CD4-positive, alpha-beta memory T cell (primary cell): ENCODE measurements at regions of chr5 and their contacts with region 1.

Region 1: GRCh38 chr5:55021410-55021809 is 2.6 kb upstream of the GZMK start:
- DNase-seq: no peak
- H3K4me3 ChIP-seq: no peak overlapping the region
- H3K4me3 Mint-ChIP-seq: peak overlapping the region in 6 of 8 donors; percentile 3 to 71 (median 46)
- H3K27ac ChIP-seq: no peak overlapping the region
- H3K27ac Mint-ChIP-seq: peak overlapping the region in 6 of 7 donors; percentile 49 to 92 (median 77)
- H3K4me1 ChIP-seq: peaks cover 46% of the 10 kb centered on the region
- H3K4me1 Mint-ChIP-seq: peaks cover 31 to 65% (median 50%) of the 10 kb centered on the region in 4 donors
- H3K27me3 ChIP-seq: no peaks in the 10 kb centered on the region
- H3K27me3 Mint-ChIP-seq: no peaks in the 10 kb centered on the region

Region 2: GRCh38 chr5:54832858-54833257 is 188.6 kb before region 1 on chr5:
- CTCF ChIA-PET with region 1: no interaction called
- POLR2A ChIA-PET with region 1: no interaction called
- intact Hi-C with region 1: no loop called
- DNase-seq: no peak
- H3K4me3 ChIP-seq: no peak overlapping the region
- H3K4me3 Mint-ChIP-seq: no peak overlapping the region
- H3K27ac ChIP-seq: no peak overlapping the region
- H3K27ac Mint-ChIP-seq: peak overlapping the region in 3 of 7 donors; percentile 47 to 78 (median 54)
- H3K4me1 ChIP-seq: peaks cover 12% of the 10 kb centered on the region
- H3K4me1 Mint-ChIP-seq: peaks cover 10 to 18% (median 11%) of the 10 kb centered on the region in 4 donors
- H3K27me3 ChIP-seq: no peaks in the 10 kb centered on the region
- H3K27me3 Mint-ChIP-seq: peaks cover 1 to 2% of the 10 kb centered on the region in 2 donors

Region 3: GRCh38 chr5:54990841-54991258 is 30.6 kb before region 1 on chr5:
- CTCF ChIA-PET with region 1: no interaction called
- POLR2A ChIA-PET with region 1: interaction called, 10 read pairs
- intact Hi-C with region 1: loop called (anchors 5 kb)
- DNase-seq: no peak
- H3K4me3 ChIP-seq: no peak overlapping the region
- H3K4me3 Mint-ChIP-seq: peak overlapping the region in 2 of 8 donors; percentile 7 to 52
- H3K27ac ChIP-seq: no peak overlapping the region
- H3K27ac Mint-ChIP-seq: no peak overlapping the region
- H3K4me1 ChIP-seq: peaks cover 49% of the 10 kb centered on the region
- H3K4me1 Mint-ChIP-seq: peaks cover 32 to 75% (median 50%) of the 10 kb centered on the region in 4 donors
- H3K27me3 ChIP-seq: no peaks in the 10 kb centered on the region
- H3K27me3 Mint-ChIP-seq: no peaks in the 10 kb centered on the region

Region 4: DNA sequence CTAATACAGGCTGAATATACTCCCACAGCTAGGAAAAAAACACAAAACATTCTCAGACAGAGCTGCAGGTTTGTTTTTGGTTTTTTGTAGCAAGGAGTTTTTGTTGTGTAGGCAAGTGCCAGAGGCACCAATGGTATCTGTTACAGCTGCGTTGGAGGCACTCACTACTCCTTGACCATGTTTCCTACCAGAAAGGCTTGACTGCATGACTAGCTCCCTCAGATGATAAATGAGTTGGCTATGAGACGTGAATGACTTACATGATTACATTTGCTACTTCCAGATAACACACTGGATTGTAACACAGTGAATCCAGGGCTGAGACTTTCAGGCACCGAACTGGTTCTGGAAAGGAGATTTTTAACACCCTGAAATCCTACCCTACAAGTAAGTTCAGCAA is 21.5 kb after region 1 on chr5:
- CTCF ChIA-PET with region 1: interaction called, 34 read pairs
- POLR2A ChIA-PET with region 1: interaction called, 52 read pairs
- intact Hi-C with region 1: loop called (anchors 2 kb)
- DNase-seq: no peak
- H3K4me3 ChIP-seq: no peak overlapping the region
- H3K4me3 Mint-ChIP-seq: no peak overlapping the region
- H3K27ac ChIP-seq: no peak overlapping the region
- H3K27ac Mint-ChIP-seq: no peak overlapping the region
- H3K4me1 ChIP-seq: peaks cover 6% of the 10 kb centered on the region
- H3K4me1 Mint-ChIP-seq: peaks cover 5 to 18% (median 11%) of the 10 kb centered on the region in 4 donors
- H3K27me3 ChIP-seq: no peaks in the 10 kb centered on the region
- H3K27me3 Mint-ChIP-seq: no peaks in the 10 kb centered on the region

Region 5: DNA sequence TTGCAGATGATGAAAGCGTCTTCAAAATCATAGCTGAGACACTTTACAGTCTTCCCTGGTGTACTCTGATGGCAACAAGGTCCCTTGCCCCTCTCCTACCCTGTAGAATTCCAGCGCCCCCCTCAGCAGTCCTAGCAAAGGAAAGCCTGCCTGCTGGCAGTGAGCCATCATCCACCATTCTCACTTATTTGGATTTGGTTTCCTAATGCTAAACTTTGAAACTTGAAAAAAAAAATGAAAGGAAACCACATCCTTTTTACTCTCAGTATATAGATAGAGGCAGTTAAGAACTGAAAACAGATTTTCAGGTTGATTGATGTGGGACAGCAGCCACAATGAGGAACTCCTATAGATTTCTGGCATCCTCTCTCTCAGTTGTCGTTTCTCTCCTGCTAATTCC is 80.9 kb after region 1 on chr5 and contains the start of gene GZMA:
- CTCF ChIA-PET with region 1: interaction called, 10 read pairs
- POLR2A ChIA-PET with region 1: interaction called, 16 read pairs
- intact Hi-C with region 1: loop called (anchors 5 kb)
- DNase-seq: peak; percentile 66 to 81 (median 76)
- H3K4me3 ChIP-seq: peak within 1 kb of the TSS; percentile 34 to 56
- H3K4me3 Mint-ChIP-seq: peak within 1 kb of the TSS; percentile 83 to 96 (median 90)
- H3K27ac ChIP-seq: peak within 1 kb of the TSS; percentile 32
- H3K27ac Mint-ChIP-seq: peak within 1 kb of the TSS; percentile 78 to 96 (median 91)
- H3K4me1 ChIP-seq: peaks cover 61% of the 10 kb centered on the region
- H3K4me1 Mint-ChIP-seq: peaks cover 58 to 89% (median 75%) of the 10 kb centered on the region in 4 donors
- H3K27me3 ChIP-seq: no peaks in the 10 kb centered on the region
- H3K27me3 Mint-ChIP-seq: no peaks in the 10 kb centered on the region
- total RNA-seq, gene GZMA: 25.0 to 28.2 TPM

Region 6: DNA sequence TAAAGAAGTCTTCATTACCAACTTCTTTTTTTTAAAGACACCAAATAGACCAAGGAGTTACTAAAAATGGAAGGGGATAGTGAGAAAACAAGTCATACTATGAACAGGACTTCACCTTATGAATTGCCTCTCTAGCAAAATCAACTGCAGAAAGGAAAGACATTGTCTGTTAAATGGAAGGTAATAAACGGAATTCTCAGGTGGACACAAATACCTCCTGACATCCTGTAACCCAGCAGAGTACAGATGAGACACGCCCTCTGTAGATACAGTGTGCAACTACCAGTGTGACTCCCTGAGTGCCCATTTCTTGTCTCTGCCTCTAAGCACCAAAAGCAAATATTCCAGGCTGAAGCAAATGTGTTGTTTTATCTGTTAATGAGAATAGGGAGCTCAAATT is 525.5 kb after region 1 on chr5:
- CTCF ChIA-PET with region 1: no interaction called
- POLR2A ChIA-PET with region 1: no interaction called
- intact Hi-C with region 1: no loop called
- DNase-seq: no peak
- H3K4me3 ChIP-seq: no peak overlapping the region
- H3K4me3 Mint-ChIP-seq: no peak overlapping the region
- H3K27ac ChIP-seq: no peak overlapping the region
- H3K27ac Mint-ChIP-seq: no peak overlapping the region
- H3K4me1 ChIP-seq: no peaks in the 10 kb centered on the region
- H3K4me1 Mint-ChIP-seq: peaks cover 0 to 2% (median under 1%) of the 10 kb centered on the region in 4 donors
- H3K27me3 ChIP-seq: peaks cover 6% of the 10 kb centered on the region
- H3K27me3 Mint-ChIP-seq: peaks cover 2 to 21% of the 10 kb centered on the region in 2 donors